MCF 10A (cell line): ENCODE measurements at regions of chr10 and their contacts with region 1.

Region 1: DNA sequence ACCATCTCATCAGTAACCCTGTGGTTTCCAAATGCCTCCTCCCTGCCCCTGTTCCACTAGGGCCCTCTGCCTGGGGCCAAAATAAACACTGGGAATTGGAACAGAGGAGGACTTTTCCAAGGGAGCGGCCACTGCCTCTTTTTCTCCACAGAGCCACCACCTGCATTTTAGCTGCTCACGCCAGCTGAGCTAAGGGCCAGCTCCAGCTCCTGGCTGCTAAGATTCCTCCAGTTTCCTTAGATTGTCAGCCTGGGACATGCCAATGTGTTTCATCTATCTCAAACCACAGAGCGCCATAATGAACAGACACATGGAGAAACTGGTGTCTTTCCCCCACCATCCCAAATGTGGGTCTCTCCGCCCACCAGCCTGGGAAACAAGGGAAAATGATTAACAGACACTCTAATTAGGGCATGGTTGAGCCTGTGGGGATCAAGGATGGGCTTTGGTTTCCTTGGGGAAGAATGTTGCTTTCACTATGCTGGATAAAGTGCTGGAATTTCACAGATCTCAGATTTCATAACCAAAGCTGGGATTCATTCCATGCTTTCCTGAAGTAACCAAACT is 52.2 kb downstream of the ASB13 start:
- DNase-seq: peak; percentile 86
- H3K4me3 Mint-ChIP-seq: peak overlapping the region; percentile 19
- H3K27ac Mint-ChIP-seq: peak overlapping the region; percentile 93
- H3K4me1 Mint-ChIP-seq: peaks cover 72% of the 10 kb centered on the region
- H3K27me3 Mint-ChIP-seq: no peaks in the 10 kb centered on the region
- CTCF ChIP-seq: no peak

Region 2: DNA sequence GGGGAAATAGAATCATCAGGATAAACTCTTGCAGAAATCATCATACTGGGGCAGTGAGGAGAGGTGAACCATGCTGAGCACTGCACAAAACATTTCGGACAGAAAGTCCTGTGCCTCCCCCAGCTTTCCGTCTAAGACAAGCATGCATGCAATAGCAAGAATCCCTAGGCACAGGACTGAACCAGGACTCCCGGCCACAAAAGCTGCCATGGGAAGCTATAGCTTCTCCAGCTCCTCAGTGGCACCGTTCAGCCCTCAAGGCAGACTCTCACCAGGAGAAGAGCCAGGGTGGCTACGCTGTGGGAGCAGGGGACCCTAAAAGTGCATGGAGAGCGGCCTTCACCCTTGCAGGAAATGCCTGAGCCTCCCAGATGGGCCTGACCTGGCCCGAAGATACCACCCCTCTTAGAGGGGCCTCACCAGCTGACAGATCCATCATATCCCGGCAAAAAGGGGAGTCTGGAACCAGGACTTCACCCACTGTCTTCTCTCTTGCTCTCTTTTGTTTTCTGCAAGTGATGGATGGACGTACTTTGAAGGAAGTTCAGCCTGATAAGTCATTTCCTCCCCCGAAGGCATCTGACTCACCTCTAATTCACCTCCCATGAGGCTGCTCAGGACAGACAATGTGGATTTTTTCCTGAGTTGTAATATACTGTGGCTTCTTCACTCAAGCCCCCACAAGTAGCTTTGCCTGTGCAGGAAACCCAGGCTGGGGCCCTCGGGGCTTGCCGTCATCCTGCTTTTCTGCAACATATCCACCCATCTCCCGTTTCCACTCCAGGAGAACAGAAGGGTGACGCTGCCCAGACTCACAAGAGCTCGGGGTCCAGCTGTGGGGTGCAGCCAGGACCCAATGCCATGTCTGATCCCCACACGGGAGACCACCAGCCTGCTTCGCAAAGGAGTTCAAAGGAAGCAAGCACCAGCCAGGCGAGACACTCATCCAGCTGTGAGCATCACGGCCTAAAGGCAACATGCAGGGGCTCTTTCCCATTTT is 18.3 kb before region 1 on chr10:
- CTCF ChIA-PET with region 1: interaction called, 3 read pairs
- POLR2A ChIA-PET with region 1: interaction called, 15 read pairs
- intact Hi-C with region 1: loop called (anchors 1 kb)
- DNase-seq: peak; percentile 95
- H3K4me3 Mint-ChIP-seq: peak overlapping the region; percentile 43
- H3K27ac Mint-ChIP-seq: peak overlapping the region; percentile 60
- H3K4me1 Mint-ChIP-seq: peaks cover 25% of the 10 kb centered on the region
- H3K27me3 Mint-ChIP-seq: no peaks in the 10 kb centered on the region
- CTCF ChIP-seq: no peak

Region 3: DNA sequence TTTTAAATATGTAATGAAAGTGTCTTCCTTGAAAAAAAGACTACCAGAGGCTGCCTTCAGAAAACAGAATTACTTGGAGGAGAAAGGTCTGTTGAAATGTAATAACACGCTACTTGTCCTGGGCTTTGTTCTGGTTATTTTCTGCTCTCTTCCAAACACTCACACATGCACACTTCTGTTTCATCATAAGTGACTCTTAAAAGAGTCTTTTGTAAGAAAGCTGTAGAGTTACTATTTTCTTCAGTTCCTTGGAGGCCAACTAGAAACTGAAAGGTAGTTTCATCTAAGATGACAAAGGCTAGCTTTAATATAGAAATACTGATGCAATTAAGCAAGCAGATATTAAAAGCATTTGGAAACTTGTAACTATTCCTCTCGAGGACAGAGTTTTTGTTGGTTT is 109.5 kb after region 1 on chr10:
- CTCF ChIA-PET with region 1: no interaction called
- POLR2A ChIA-PET with region 1: no interaction called
- intact Hi-C with region 1: no loop called
- DNase-seq: no peak
- H3K4me3 Mint-ChIP-seq: no peak overlapping the region
- H3K27ac Mint-ChIP-seq: peak overlapping the region; percentile 19
- H3K4me1 Mint-ChIP-seq: no peaks in the 10 kb centered on the region
- H3K27me3 Mint-ChIP-seq: no peaks in the 10 kb centered on the region
- CTCF ChIP-seq: no peak

Region 4: DNA sequence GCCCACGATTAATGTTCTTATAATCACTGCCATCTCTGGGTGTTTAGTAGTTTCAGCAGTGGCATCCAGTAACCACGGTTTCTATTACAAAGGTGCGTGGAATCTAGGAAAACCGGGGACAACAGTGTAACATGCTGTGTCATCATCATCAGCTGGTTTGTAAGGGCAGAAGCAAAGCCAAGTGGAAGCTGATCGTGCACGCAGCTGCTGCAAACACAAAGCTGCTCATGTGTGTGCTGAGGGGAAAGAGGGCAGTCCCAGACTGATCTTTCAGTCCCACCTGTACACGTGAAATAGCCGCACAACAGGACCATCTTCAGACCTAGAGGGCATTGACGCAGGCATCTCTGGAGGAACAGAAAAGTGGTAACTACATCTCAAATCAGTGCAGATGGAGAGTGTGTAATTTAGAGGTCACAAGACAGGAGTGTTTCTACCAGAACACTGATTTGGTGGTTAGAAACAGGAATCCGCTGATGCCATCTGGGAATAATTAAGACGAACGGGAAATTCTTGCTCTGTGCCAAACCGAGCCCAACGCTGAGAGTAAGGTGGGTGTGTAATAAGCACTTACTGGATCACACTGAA is 262.0 kb after region 1 on chr10:
- CTCF ChIA-PET with region 1: no interaction called
- POLR2A ChIA-PET with region 1: no interaction called
- intact Hi-C with region 1: no loop called
- DNase-seq: no peak
- H3K4me3 Mint-ChIP-seq: no peak overlapping the region
- H3K27ac Mint-ChIP-seq: no peak overlapping the region
- H3K4me1 Mint-ChIP-seq: no peaks in the 10 kb centered on the region
- H3K27me3 Mint-ChIP-seq: no peaks in the 10 kb centered on the region
- CTCF ChIP-seq: no peak